Colonic mucosa (tissue), 4 donors: ENCODE measurements at regions of chr12 and their contacts with region 1.

Region 1: DNA sequence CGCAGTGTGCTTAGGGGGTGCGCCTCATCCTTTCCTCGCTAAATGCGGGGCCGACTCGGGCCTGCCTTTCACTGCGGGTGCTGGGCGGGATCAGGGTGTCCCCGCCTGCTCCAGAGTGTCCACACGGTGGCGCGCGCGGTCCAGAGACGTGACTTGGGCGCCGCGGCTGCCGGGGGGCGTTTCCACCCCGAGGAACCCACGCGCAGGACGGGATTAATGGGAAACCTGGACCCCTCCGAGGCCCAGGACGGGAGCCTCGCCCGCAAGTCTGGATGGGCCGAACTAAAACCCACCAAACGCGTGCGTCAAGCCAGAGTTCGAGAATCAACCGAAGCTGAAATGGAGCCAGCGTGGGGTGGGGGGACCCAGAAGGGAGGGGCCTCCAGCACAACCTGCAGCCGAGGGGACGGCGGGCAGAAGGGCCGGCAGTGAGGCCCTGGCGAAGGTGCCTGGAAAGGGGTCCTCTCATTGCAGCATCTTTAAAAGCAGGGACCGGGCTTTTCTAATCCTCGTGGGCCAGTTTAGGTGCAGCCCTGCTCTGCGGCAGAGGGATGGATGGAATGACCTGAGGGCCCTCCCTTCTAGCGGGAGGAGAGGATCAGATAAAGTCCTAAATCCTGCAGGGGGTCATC is 93.3 kb downstream of the NINJ2 start:
- DNase-seq: peak; percentile 93
- H3K4me3 ChIP-seq: peak overlapping the region; percentile 55
- H3K27ac ChIP-seq: peak overlapping the region; percentile 95
- H3K4me1 ChIP-seq: peaks cover 5% of the 10 kb centered on the region
- H3K27me3 ChIP-seq: no peaks in the 10 kb centered on the region
- CTCF ChIP-seq: peak; percentile 97

Region 2: GRCh38 chr12:751192-751998 is 181.5 kb after region 1 on chr12:
- intact Hi-C with region 1: loop called (anchors 2 kb)
- DNase-seq: peak; percentile 92
- H3K4me3 ChIP-seq: peak overlapping the region; percentile 95
- H3K27ac ChIP-seq: peak overlapping the region; percentile 98
- H3K4me1 ChIP-seq: peaks cover 7% of the 10 kb centered on the region
- H3K27me3 ChIP-seq: no peaks in the 10 kb centered on the region
- CTCF ChIP-seq: peak; percentile 60

Region 3: DNA sequence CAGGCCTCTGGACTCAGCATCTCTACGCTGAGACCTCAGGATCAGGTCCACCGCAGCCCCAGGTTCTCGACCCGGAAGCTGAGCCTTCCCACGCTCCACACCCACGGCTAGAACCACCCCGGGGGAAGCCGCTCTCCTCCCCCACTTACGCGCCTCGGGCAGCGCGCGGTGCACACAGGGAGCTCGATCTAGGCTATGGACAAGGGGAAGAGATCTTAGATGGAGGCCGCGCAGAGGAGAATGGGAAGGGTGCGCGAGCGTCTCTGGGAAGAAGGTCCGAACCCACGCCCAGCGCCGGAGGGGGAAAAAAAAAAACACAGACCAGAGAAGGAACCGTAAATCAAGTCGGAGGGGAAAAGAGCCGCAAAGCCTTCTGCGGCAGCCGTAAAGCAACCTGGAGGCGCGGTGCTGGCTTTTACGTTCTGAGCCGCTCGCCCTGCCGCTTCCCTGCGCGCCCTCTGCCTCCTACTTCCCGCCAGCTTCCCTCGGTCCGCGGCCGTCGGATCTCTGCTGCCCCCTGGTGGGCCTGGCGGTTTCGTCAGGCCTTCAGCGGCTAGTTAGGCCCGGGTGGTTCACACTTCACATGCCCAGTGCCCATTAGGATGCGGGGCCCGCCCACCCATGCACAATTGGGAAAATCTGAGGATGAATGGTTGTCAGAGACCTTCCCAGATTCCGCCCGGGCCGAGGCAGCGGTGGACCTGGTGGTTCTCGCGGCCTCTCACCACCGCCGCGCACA is 379.7 kb after region 1 on chr12 and contains the start of gene RAD52:
- intact Hi-C with region 1: loop called (anchors 5 kb)
- DNase-seq: peak; percentile 98
- H3K4me3 ChIP-seq: peak within 1 kb of the TSS; percentile 84
- H3K27ac ChIP-seq: peak within 1 kb of the TSS; percentile 98
- H3K4me1 ChIP-seq: no peaks in the 10 kb centered on the region
- H3K27me3 ChIP-seq: no peaks in the 10 kb centered on the region
- CTCF ChIP-seq: peak; percentile 98
- total RNA-seq, gene RAD52: 19.4 to 28.8 TPM

Region 4: DNA sequence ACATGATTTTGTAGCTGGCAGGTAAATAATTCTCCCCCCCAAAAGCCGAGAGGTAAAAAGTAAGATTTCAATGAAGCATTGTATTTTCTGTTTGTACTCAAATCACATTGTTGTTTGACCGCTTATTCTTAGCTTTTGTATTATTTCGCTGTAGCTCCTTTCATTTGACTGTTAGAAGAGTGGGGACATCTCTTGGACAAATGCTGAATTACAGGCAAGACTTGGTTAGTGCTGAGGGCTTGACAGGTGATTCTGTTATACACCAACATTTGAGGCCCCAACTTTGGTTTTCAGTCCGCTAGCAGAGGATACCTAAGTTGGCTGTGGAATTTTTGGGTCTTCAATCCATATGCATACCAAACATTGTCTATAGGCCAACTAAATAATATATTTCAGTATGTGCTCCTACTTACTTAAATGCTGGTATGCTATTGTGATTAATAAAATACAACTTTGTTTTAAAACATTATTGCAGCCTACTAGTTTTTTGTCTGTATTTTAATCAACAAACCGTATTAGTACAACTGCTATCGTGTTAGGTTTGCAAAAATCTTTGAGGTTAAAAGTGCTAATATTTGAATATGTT is 523.3 kb after region 1 on chr12:
- intact Hi-C with region 1: loop called (anchors 10 kb)
- DNase-seq: peak; percentile 42
- H3K4me3 ChIP-seq: no peak overlapping the region
- H3K27ac ChIP-seq: no peak overlapping the region
- H3K4me1 ChIP-seq: no peaks in the 10 kb centered on the region
- H3K27me3 ChIP-seq: no peaks in the 10 kb centered on the region
- CTCF ChIP-seq: peak; percentile 64